PC-3 (cell line): ENCODE measurements at regions of chr1 and their contacts with region 1.

Region 1: DNA sequence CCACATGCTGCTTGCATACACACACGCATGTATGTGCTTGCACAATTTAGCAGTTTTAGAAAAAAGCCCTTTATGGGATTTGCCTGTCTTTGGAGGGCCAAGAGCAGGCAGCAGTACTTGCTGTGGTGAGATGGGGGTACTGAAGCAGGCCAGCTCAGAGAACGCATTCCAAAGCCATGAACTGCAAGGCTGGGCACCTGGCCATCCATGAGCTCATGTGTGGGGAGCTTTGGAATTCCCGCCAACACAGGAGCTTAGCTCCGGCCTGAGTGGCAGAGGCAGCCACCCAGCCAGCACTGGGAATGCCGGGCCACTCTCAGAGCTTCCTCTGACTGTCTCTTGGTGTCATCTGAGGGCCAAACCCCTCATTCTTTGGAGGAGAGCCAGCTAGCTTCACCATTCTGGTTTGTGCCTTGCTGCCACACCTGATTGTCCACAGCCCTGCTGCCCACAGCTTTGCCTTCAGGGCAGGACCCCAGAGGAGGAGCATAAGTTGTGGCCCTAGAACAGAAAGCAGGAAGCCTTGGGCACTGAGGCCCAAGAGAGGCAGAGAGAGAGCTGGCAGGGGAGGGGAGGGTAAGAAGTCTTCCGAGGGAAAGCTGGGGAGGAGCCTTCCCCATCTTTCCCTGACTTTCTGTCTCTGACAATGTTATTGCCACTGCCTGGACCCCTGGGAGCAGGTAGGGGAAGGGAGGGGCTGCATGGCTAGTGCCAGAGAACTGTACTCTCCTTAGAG is 92.1 kb upstream of the POU3F1 start:
- DNase-seq: peak; percentile 99
- ATAC-seq: peak; percentile 98
- H3K4me3 ChIP-seq: no peak overlapping the region
- H3K27ac ChIP-seq: peak overlapping the region; percentile 52
- H3K4me1 ChIP-seq: peaks cover 37% of the 10 kb centered on the region
- H3K27me3 ChIP-seq: no peaks in the 10 kb centered on the region
- CTCF ChIP-seq: no peak

Region 2: GRCh38 chr1:38071312-38072256 is 67.1 kb before region 1 on chr1:
- CTCF ChIA-PET with region 1: interaction called, 13 read pairs
- POLR2A ChIA-PET with region 1: no interaction called
- intact Hi-C with region 1: no loop called
- DNase-seq: peak; percentile 38
- ATAC-seq: peak; percentile 86
- H3K4me3 ChIP-seq: no peak overlapping the region
- H3K27ac ChIP-seq: no peak overlapping the region
- H3K4me1 ChIP-seq: no peaks in the 10 kb centered on the region
- H3K27me3 ChIP-seq: peaks cover 48% of the 10 kb centered on the region
- CTCF ChIP-seq: peak; percentile 55